Psoas muscle (tissue), 8 donors: ENCODE measurements at regions of chr11 and their contacts with region 1.

Region 1: DNA sequence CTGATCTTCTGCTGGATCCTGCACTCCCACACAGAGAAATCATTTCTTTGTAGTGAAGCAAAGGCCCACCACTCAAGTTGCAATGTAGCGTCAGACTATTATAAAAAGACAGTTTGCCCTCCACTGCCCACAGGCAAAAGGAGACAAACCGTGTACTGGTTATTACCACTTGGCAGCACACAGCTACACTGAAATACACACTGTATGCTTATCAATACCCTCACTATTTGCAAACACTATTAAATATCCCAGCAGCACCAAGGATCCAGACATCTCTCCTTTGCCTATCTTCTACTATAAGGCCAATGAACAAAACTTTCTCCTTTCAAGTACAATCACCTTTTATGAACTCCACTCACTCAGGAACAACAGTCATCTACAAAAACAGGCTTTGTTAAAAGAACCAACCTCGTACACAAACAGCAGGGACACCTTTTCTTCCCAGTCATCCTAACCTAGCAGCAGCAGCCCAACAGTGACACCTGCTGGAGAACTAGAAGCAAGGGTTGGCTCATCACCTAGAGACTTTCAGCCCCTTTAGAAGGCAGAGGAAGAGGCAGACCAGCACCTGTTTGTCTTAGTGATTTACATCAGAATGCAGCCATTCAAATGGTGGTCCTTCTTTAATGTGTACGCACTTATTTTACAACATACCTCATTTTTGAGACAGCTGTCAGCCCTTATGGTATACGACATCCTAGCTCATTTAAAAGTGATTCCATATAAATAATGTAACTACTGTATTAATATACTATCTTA is 56.1 kb downstream of the AMBRA1 start:
- DNase-seq: peak; percentile 53 to 71
- ATAC-seq: peak; percentile 75 to 83 (median 82)
- H3K4me3 ChIP-seq: no peak overlapping the region
- H3K27ac ChIP-seq: no peak overlapping the region
- H3K4me1 ChIP-seq: peaks cover 37% of the 10 kb centered on the region
- H3K27me3 ChIP-seq: no peaks in the 10 kb centered on the region
- CTCF ChIP-seq: peak; percentile 88

Region 2: DNA sequence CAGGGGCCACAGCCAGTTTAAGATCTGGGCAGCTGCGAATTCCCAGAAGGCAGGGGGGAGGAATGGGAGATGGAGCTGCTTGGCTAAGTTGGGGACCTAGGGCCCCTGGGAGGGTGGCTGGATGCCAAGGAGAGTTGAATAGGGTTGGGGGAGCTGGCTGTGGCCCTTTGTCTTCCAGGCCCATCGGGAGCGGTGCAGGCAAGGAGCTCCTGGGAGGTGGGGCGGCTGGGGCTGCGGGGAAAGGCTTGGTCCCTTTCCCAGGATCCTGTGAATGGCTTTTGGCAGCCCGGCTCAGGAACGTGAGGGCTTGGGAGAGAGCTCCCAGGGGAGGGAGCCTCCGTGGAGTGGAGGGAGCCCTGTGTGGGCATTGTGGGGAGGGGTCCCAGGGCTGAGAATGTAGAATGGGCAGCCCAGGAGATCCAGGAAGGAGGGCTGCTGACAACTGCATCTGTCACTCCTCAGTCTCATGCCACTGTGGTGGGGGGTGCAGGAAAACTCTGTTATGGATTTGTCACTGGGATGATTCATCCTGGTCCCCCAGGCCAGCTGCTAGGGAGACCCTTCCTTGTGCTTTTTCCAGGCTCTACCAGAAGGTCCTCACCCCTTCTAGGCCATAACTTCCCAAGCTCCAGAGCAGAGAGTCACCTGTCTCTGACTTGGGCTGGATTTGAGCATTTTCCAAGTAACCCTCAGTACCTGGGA is 636.6 kb before region 1 on chr11:
- intact Hi-C with region 1: no loop called
- DNase-seq: no peak
- ATAC-seq: no peak
- H3K4me3 ChIP-seq: peak overlapping the region; percentile 69
- H3K27ac ChIP-seq: no peak overlapping the region
- H3K4me1 ChIP-seq: peaks cover 7% of the 10 kb centered on the region
- H3K27me3 ChIP-seq: peaks cover 0 to 38% (median 13%) of the 10 kb centered on the region in 3 donors
- CTCF ChIP-seq: no peak

Region 3: DNA sequence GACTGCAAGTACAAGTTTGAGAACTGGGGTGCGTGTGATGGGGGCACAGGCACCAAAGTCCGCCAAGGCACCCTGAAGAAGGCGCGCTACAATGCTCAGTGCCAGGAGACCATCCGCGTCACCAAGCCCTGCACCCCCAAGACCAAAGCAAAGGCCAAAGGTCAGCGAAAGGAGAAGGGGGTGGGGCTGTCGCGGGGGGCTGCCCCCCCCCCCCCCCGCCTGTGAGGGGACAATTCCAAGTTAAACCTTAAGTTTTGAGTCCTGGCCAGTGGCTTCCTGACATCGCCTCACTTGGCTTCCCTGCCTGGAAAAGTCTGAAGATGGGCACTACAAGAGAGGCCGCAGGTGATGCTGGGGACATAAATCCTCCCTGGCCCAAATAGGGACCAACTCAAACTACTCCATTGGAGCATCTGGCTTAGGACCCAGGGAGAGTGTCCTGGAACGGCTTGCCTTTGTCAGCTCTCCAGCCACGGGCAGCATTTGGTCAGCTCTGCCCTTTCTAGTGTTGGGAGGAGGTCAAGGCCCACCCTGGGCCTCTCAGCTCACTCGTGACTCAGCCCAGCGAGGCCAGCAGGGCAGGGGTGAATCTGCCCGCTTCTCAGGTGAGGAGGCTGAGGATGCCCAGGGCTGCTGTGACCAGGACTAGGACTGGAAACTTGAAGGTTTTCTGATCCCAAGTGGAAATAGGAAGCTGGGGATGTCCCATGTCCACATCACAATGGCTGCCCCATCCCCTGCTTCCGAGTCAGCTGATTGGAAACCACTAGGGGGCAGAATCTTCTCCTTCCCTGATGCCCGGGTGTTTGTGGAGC is 154.9 kb before region 1 on chr11:
- intact Hi-C with region 1: loop called in 1 of 2 experiments (anchors 2 kb)
- DNase-seq: peak in 1 of 2 donors; percentile 58
- ATAC-seq: no peak
- H3K4me3 ChIP-seq: peak overlapping the region; percentile 70
- H3K27ac ChIP-seq: no peak overlapping the region
- H3K4me1 ChIP-seq: peaks cover 14% of the 10 kb centered on the region
- H3K27me3 ChIP-seq: peaks cover 0 to 41% (median 15%) of the 10 kb centered on the region in 3 donors
- CTCF ChIP-seq: peak; percentile 52

Region 4: DNA sequence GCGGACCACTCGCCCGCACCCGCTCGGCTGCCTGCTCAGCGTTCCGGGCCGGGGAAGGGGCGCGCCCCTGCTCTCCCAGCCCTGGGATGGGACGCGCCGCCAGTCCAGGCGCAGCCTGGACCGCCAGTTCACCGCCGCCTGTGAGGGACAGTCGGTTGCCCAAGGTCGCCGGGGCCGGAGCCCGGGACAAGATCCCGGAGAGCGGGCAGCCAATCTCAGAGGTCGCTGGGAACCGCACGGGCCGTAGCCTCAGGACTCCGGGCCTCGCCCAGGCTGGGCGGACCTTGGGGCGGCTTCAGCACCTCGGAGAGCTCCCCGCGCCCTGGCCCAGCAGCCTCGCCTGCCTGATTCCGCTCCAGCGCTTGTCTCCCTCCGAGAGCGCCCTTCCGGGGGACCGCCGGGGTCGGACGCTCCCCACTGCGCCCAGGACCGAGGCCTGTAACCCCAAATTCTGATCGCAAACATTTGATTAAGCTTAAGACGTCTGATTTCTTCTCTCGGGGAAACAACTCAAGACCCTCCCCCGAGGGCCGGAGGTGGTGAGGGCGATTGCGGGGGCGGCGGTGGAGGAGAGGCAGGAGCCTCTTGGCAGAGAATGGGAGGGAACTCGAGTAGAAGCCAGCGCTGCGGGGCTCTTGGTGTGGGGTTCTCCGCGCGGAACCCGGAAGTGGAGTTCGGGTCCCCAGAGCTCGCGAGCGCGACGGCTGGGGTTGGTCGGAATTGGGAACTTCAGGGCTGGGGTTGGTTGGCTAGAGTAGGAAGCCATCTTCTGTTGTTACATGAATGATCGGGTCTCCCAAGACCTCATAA is 145.1 kb before region 1 on chr11:
- intact Hi-C with region 1: loop called in 1 of 2 experiments (anchors 2 kb)
- DNase-seq: peak; percentile 89 to 93
- ATAC-seq: peak; percentile 88 to 93 (median 92)
- H3K4me3 ChIP-seq: peak overlapping the region; percentile 56
- H3K27ac ChIP-seq: no peak overlapping the region
- H3K4me1 ChIP-seq: peaks cover 21% of the 10 kb centered on the region
- H3K27me3 ChIP-seq: peaks cover 0 to 43% (median 14%) of the 10 kb centered on the region in 3 donors
- CTCF ChIP-seq: no peak

Region 5: GRCh38 chr11:46489661-46490560 is 47.8 kb before region 1 on chr11:
- intact Hi-C with region 1: loop called in 1 of 2 experiments (anchors 5 kb)
- DNase-seq: no peak
- ATAC-seq: peak in 1 of 4 donors; percentile 59
- H3K4me3 ChIP-seq: no peak overlapping the region
- H3K27ac ChIP-seq: no peak overlapping the region
- H3K4me1 ChIP-seq: peaks cover 6% of the 10 kb centered on the region
- H3K27me3 ChIP-seq: no peaks in the 10 kb centered on the region
- CTCF ChIP-seq: peak; percentile 42